Adrenal gland (tissue), 19 donors: ENCODE measurements at regions of chrX and their contacts with region 1.

Region 1: DNA sequence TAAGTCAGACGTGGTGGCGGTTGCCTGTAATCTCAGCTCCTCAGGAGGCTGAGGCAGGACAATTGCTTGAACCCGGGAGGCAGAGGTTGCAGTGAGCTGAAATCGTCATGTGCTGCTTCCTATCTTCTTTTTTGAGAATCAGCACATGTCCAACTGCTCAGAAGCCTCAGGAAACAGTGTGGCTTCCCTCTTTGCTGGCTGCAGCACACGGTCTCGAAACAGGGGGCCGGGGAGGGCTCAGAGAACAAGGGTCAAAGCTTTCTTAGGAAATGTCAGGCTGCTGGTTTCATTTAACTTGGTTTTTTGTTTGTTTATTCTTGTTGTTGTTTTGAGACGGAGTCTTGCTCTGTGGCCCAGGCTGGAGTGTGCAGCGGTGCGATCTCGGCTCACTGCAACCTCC is 31.3 kb downstream of the CRLF2 start:
- DNase-seq: peak in 1 of 7 donors; percentile 27
- H3K4me3 ChIP-seq: no peak overlapping the region
- H3K27ac ChIP-seq: no peak overlapping the region
- H3K4me1 ChIP-seq: no peaks in the 10 kb centered on the region
- H3K27me3 ChIP-seq: peaks cover 3% of the 10 kb centered on the region
- CTCF ChIP-seq: no peak
- POLR2A ChIP-seq: no peak

Region 2: DNA sequence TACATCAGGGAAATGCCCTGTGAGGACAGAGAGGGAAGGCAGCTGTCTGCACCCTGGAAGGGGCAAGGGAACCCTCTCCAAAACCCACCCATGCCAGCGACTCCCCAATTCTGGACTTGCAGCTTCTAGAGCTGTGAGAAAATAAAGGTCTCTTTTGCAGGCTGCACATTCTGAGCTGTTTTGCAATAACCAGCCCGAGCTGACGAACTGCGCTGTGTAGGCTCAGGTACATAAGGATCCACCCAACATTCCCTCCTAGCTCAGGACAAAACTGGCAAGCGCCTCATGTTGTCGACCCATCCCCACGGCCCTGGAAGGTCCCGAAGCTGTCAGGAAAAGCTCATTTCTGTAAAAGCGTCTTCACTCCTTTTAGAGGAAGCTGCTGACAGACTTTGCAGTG is 240.5 kb before region 1 on chrX:
- intact Hi-C with region 1: loop called in 1 of 2 experiments (anchors 5 kb)
- DNase-seq: no peak
- H3K4me3 ChIP-seq: no peak overlapping the region
- H3K27ac ChIP-seq: no peak overlapping the region
- H3K4me1 ChIP-seq: no peaks in the 10 kb centered on the region
- H3K27me3 ChIP-seq: no peaks in the 10 kb centered on the region
- CTCF ChIP-seq: no peak
- POLR2A ChIP-seq: no peak

Region 3: GRCh38 chrX:973010-973632 is 208.0 kb before region 1 on chrX:
- intact Hi-C with region 1: no loop called
- DNase-seq: no peak
- H3K4me3 ChIP-seq: no peak overlapping the region
- H3K27ac ChIP-seq: no peak overlapping the region
- H3K4me1 ChIP-seq: no peaks in the 10 kb centered on the region
- H3K27me3 ChIP-seq: no peaks in the 10 kb centered on the region
- CTCF ChIP-seq: no peak
- POLR2A ChIP-seq: no peak

Region 4: GRCh38 chrX:1391707-1392375 is 210.7 kb after region 1 on chrX and contains the start of gene SLC25A6:
- intact Hi-C with region 1: no loop called
- DNase-seq: peak; percentile 98 to 99 (median 99)
- H3K4me3 ChIP-seq: peak within 1 kb of the TSS; percentile 59 to 99 (median 80)
- H3K27ac ChIP-seq: peak within 1 kb of the TSS; percentile 98 to 100 (median 99)
- H3K4me1 ChIP-seq: peaks cover 14 to 16% of the 10 kb centered on the region in 2 donors
- H3K27me3 ChIP-seq: no peaks in the 10 kb centered on the region
- CTCF ChIP-seq: peak in 3 of 6 experiments; percentile 9 to 54 (median 37)
- POLR2A ChIP-seq: peak; percentile 87 to 90
- total RNA-seq, gene SLC25A6: 183 to 509 (median 387) TPM